ENCODE measurements at regions of chr16 and their contacts with region 1.

Region 1: DNA sequence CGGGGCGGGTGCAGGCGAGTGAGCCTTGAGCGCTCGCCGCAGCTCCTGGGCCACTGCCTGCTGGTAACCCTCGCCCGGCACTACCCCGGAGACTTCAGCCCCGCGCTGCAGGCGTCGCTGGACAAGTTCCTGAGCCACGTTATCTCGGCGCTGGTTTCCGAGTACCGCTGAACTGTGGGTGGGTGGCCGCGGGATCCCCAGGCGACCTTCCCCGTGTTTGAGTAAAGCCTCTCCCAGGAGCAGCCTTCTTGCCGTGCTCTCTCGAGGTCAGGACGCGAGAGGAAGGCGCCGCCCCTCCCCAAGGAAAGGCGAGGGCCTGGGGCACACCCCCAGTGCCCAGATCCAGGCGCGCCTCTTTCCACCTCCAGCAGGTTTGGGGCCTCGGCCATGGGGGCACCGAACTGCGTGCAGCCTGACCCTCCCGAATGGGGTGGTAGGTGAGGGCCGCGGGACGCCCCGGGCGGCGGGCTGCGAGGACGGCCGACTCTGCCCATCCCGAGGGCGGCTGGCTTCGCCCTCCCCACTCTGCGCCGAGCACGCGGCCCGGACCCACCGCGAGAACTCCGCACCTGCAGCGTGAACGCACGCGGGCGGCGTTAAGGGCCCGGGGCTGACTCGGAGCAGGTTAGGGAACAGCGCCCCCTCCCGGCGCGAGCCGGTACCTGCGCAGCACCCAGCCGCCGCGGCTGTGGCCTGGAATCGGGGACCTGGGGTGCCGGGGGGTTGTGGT is 844 bp downstream of the HBQ1 start:
- DNase-seq: peak; percentile 88
- H3K4me3 Mint-ChIP-seq: peak overlapping the region; percentile 49
- H3K27ac Mint-ChIP-seq: no peak overlapping the region
- H3K4me1 Mint-ChIP-seq: no peaks in the 10 kb centered on the region
- H3K27me3 Mint-ChIP-seq: peaks cover 25% of the 10 kb centered on the region

Region 2: DNA sequence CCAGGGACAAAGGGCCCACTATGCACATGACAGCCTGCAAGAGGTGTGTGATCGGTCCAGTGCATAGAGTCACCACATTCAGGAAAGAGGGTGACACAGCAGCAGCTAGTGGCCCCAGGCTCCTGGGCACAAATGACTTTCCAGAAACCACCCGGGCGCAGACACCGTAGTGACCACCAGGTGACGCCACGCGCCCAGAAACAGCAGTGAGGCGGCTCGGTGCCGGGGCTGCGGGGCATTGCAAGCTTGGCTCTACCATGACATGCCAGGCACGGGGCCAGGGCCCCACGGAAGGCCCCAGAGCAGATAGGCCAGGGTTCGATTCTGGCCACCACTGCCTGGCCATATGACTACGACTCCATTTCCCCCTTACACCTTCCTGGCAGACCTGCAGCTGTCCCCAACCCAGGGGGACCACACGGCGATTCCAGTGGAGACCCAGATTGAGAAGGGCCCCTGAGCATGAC is 115.4 kb before region 1 on chr16:
- CTCF ChIA-PET with region 1: interaction called, 15 read pairs
- intact Hi-C with region 1: loop called (anchors 1 kb)
- DNase-seq: peak; percentile 93
- H3K4me3 Mint-ChIP-seq: no peak overlapping the region
- H3K27ac Mint-ChIP-seq: no peak overlapping the region
- H3K4me1 Mint-ChIP-seq: peaks cover 4% of the 10 kb centered on the region
- H3K27me3 Mint-ChIP-seq: peaks cover 12% of the 10 kb centered on the region

Region 3: GRCh38 chr16:106623-107324 is 74.3 kb before region 1 on chr16:
- CTCF ChIA-PET with region 1: interaction called, 20 read pairs
- intact Hi-C with region 1: loop called (anchors 1 kb)
- DNase-seq: peak; percentile 60
- H3K4me3 Mint-ChIP-seq: no peak overlapping the region
- H3K27ac Mint-ChIP-seq: no peak overlapping the region
- H3K4me1 Mint-ChIP-seq: no peaks in the 10 kb centered on the region
- H3K27me3 Mint-ChIP-seq: no peaks in the 10 kb centered on the region

Region 4: DNA sequence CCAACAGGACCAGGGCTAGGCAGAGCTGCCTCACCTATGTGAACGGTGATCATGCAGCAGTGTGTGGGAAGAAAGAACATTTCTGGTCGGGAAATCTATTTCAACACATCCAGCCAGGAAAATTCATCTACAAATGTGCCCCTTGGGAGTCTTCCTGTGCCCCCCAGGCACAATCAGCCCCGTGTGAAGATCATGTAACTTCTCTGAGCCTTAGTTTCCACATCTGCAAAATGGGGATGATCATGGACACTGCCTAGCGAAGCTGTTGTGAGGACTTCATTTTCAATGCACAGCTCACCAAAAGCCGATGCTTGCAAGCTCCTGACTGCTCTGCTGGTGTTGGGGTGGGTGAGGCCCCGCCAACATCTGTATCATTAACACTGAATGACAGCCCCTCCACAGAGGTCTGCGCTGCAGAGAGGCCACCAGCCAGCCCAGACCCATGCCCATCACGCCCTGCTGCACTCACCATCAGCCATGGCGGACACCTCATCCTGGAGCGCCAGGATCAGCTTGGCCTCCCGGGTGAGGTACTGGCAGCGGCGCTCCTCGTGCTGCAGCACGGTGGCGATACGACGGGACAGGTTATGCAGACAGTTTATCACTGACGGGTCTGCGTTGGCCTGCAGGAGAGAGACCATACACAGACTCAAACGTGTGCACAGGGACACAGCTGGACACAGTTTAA is 68.8 kb before region 1 on chr16:
- CTCF ChIA-PET with region 1: interaction called, 20 read pairs
- intact Hi-C with region 1: loop called (anchors 1 kb)
- DNase-seq: no peak
- H3K4me3 Mint-ChIP-seq: no peak overlapping the region
- H3K27ac Mint-ChIP-seq: no peak overlapping the region
- H3K4me1 Mint-ChIP-seq: peaks cover 6% of the 10 kb centered on the region
- H3K27me3 Mint-ChIP-seq: no peaks in the 10 kb centered on the region

Region 5: GRCh38 chr16:117379-118365 is 63.4 kb before region 1 on chr16:
- CTCF ChIA-PET with region 1: interaction called, 15 read pairs
- intact Hi-C with region 1: loop called (anchors 1 kb)
- DNase-seq: peak; percentile 58
- H3K4me3 Mint-ChIP-seq: no peak overlapping the region
- H3K27ac Mint-ChIP-seq: no peak overlapping the region
- H3K4me1 Mint-ChIP-seq: peaks cover 6% of the 10 kb centered on the region
- H3K27me3 Mint-ChIP-seq: no peaks in the 10 kb centered on the region

Region 6: GRCh38 chr16:351804-352520 is 170.9 kb after region 1 on chr16:
- CTCF ChIA-PET with region 1: no interaction called
- intact Hi-C with region 1: no loop called
- DNase-seq: no peak
- H3K4me3 Mint-ChIP-seq: peak overlapping the region; percentile 91
- H3K27ac Mint-ChIP-seq: peak overlapping the region; percentile 82
- H3K4me1 Mint-ChIP-seq: peaks cover 54% of the 10 kb centered on the region
- H3K27me3 Mint-ChIP-seq: no peaks in the 10 kb centered on the region

Region 7: DNA sequence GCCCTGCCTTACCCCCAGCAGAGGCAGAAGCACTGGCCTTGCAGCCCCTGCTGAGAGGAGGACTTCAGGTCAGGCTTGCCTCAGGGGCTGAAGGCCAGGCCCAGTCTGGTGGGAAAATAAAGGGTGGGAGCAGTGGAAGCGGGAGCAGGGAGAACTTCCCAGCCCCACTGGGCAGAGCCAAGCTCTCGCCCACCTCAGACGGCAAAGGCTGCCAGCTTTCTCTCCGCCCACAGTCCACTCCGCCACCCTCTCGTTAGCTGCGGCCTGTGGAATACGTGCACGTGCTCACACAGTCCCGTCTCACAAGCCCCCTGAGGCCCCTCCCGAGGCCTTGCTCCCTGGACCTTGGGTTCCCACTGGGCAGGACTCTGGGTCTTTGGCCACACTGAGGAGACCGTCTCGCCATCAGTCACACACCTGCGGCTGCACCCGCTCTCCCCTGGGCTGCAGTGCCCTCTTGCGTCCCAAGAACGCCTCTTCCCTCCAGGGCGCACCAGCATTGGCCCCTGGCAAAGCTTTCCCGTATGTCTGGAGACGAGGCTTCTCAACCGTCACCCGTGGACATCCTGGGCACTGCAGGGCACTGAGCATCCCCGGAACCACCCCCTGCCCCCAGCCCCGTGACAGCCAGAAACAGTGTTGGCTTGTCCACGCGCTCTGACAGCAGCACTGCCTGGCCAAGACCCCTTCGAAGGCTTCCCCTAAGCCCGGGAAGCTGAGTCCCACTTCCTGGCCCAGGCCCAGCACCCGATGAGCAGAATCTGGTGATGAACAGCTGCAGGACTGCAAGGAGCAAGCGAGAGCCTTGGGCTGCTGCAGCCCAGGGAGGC is 181.0 kb after region 1 on chr16:
- CTCF ChIA-PET with region 1: interaction called, 4 read pairs
- intact Hi-C with region 1: loop called (anchors 1 kb)
- DNase-seq: peak; percentile 85
- H3K4me3 Mint-ChIP-seq: no peak overlapping the region
- H3K27ac Mint-ChIP-seq: no peak overlapping the region
- H3K4me1 Mint-ChIP-seq: peaks cover 4% of the 10 kb centered on the region
- H3K27me3 Mint-ChIP-seq: no peaks in the 10 kb centered on the region

Region 8: GRCh38 chr16:1492923-1493745 is 1312.0 kb after region 1 on chr16 and contains the start of gene TELO2:
- CTCF ChIA-PET with region 1: no interaction called
- intact Hi-C with region 1: no loop called
- DNase-seq: peak; percentile 85
- H3K4me3 Mint-ChIP-seq: peak within 1 kb of the TSS; percentile 90
- H3K27ac Mint-ChIP-seq: peak within 1 kb of the TSS; percentile 94
- H3K4me1 Mint-ChIP-seq: peaks cover 16% of the 10 kb centered on the region
- H3K27me3 Mint-ChIP-seq: no peaks in the 10 kb centered on the region
- total RNA-seq, gene TELO2: 68.1 to 76.1 TPM